ENCODE measurements at regions of chr7 and their contacts with region 1.

Region 1: GRCh38 chr7:147245292-147245691 is 1128.7 kb downstream of the CNTNAP2 start:
- DNase-seq: peak; percentile 20
- H3K4me3 ChIP-seq: no peak overlapping the region
- H3K27ac ChIP-seq: no peak overlapping the region
- H3K4me1 ChIP-seq: no peaks in the 10 kb centered on the region
- H3K27me3 ChIP-seq: no peaks in the 10 kb centered on the region
- CTCF ChIP-seq: peak; percentile 15 to 53 (median 39)
- POLR2A ChIP-seq: no peak

Region 2: DNA sequence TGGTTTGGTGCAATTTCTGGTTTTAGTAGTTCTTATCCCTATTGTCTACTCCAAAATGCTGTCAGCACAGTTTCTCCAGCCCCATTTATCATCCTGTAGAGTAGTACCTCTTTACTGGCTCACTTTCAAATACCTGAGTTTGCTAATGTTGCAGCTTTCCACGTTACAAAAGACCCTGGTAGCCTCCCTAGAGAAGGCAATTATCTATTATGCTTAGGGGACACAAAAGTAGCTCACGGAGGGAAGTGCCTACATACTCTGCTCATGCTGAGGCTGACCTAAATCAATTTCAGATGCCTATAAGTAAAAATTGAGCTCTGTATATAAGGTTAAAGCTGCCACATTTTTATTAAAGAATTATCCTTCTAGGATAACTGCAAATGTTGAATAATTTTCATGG is 525.1 kb before region 1 on chr7:
- intact Hi-C with region 1: no loop called
- DNase-seq: no peak
- H3K4me3 ChIP-seq: no peak overlapping the region
- H3K27ac ChIP-seq: no peak overlapping the region
- H3K4me1 ChIP-seq: no peaks in the 10 kb centered on the region
- H3K27me3 ChIP-seq: no peaks in the 10 kb centered on the region
- CTCF ChIP-seq: no peak
- POLR2A ChIP-seq: no peak

Region 3: GRCh38 chr7:148084138-148084537 is 838.8 kb after region 1 on chr7:
- intact Hi-C with region 1: loop called (anchors 5 kb)
- DNase-seq: peak; percentile 49
- H3K4me3 ChIP-seq: no peak overlapping the region
- H3K27ac ChIP-seq: no peak overlapping the region
- H3K4me1 ChIP-seq: no peaks in the 10 kb centered on the region
- H3K27me3 ChIP-seq: no peaks in the 10 kb centered on the region
- CTCF ChIP-seq: peak in 3 of 4 experiments; percentile 42 to 56 (median 43)
- POLR2A ChIP-seq: no peak